ENCODE measurements at regions of chr2 and their contacts with region 1.

Region 1: DNA sequence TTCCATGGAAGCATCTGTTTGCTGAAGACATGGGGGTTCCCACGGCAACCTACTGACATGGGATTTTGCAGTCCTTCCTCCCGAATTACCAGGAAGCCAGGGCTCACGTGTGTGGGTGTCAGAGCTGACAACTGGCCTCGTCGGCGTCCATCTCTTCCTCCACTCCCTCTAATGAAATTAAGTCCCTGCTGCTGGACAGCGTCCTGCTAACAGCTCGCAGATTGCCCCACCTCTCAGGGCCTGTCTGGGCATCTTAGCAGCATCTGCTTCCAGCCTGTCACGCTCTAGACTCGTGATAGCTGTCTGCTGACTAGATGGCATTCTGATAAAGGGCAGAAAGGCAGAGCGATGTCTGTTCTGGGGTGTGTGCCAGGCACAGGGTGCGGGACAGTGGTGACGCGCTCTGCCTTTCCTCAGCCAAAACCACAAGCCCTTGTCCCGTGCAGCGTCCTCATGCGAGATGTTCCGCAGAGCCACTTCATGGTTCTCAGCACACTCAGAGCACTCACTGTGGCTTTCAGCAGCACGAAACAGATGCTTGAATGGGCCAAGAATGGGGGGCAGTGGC is 161.1 kb downstream of the ARL4C start:
- H3K4me3 Mint-ChIP-seq: peak overlapping the region; percentile 18
- H3K27ac Mint-ChIP-seq: peak overlapping the region; percentile 97
- H3K4me1 Mint-ChIP-seq: peaks cover 64% of the 10 kb centered on the region
- H3K27me3 Mint-ChIP-seq: peaks cover 12% of the 10 kb centered on the region

Region 2: DNA sequence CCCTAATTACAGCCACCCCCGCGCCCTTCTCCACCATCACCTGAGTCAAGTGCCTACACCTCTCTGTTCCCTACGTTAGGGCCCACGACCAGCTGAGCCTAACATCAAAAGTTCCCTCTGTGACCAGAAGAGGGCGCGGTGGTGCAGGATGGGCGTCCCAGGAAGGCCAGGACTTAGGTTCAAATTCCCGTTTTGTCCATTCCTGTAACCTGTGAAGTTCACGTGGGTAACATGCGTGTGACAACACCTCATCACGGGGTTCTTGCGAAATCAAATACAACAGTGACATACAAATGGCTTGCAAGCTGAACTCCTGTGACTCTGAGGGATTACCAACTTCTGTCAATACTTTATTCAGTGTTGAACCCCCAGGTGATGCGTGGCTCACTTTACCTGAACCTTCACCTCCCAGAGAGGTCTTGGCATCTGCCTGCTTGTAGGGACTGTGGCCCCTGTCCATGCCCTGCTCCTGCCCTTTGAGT is 46.7 kb before region 1 on chr2:
- intact Hi-C with region 1: loop called (anchors 1 kb)
- H3K4me3 Mint-ChIP-seq: no peak overlapping the region
- H3K27ac Mint-ChIP-seq: peak overlapping the region; percentile 93
- H3K4me1 Mint-ChIP-seq: peaks cover 45% of the 10 kb centered on the region
- H3K27me3 Mint-ChIP-seq: no peaks in the 10 kb centered on the region

Region 3: GRCh38 chr2:234308813-234309195 is 26.9 kb before region 1 on chr2:
- intact Hi-C with region 1: loop called (anchors 1 kb)
- H3K4me3 Mint-ChIP-seq: peak overlapping the region; percentile 45
- H3K27ac Mint-ChIP-seq: peak overlapping the region; percentile 98
- H3K4me1 Mint-ChIP-seq: peaks cover 60% of the 10 kb centered on the region
- H3K27me3 Mint-ChIP-seq: no peaks in the 10 kb centered on the region

Region 4: DNA sequence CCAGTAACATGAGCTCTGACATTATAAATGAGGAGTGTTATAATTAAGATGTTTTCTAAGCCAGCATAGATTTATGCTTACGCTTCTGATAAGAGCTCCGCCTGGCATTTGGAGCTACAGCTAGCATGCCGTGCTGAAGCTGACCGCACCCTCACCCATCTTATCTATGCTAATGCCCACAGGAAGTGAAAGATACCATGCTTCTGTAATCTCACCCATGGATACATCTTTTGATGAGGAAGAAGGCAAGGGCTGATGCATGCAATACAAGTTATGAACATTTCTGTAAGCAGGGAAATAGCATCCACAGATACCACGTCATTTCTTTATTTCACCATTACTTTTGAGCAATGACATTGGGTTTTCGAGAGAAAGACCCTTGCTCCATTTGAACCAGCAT is 78.9 kb after region 1 on chr2:
- intact Hi-C with region 1: loop called (anchors 1 kb)
- H3K4me3 Mint-ChIP-seq: no peak overlapping the region
- H3K27ac Mint-ChIP-seq: peak overlapping the region; percentile 91
- H3K4me1 Mint-ChIP-seq: peaks cover 27% of the 10 kb centered on the region
- H3K27me3 Mint-ChIP-seq: peaks cover 4% of the 10 kb centered on the region

Region 5: GRCh38 chr2:234425619-234426603 is 90.2 kb after region 1 on chr2:
- intact Hi-C with region 1: loop called (anchors 5 kb)
- H3K4me3 Mint-ChIP-seq: no peak overlapping the region
- H3K27ac Mint-ChIP-seq: peak overlapping the region; percentile 98
- H3K4me1 Mint-ChIP-seq: peaks cover 60% of the 10 kb centered on the region
- H3K27me3 Mint-ChIP-seq: no peaks in the 10 kb centered on the region

Region 6: GRCh38 chr2:234446404-234447076 is 110.8 kb after region 1 on chr2:
- intact Hi-C with region 1: loop called (anchors 1 kb)
- H3K4me3 Mint-ChIP-seq: peak overlapping the region; percentile 51
- H3K27ac Mint-ChIP-seq: peak overlapping the region; percentile 99
- H3K4me1 Mint-ChIP-seq: peaks cover 60% of the 10 kb centered on the region
- H3K27me3 Mint-ChIP-seq: no peaks in the 10 kb centered on the region

Region 7: DNA sequence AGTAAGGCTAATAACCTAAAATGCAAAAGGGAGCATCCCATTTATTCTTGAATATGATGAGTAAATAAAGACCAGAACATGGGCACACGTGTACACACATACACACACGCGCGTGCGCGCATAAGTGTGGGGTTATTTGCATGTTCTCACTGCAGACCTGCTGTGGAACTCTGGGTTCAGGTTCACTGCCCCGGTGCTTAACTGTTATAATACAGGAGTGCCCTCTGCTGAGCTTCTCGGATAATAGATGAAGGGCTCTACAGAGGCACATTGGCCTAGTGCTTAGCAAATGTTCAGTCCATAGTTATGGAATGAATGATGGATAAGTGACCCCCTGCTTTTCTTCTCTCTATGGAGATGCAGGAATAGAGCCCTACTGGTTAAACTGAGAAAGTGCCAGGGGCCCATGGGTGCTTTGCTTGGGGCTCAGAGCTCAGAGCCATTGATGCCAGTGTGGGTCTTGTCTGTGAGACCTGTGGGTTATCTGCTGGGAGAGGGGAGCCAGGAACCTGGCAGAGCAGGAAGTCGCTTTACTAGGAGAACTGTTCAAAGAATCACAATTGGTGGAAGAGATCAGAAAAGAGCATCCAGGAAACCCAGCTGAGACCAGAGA is 164.8 kb after region 1 on chr2:
- intact Hi-C with region 1: loop called (anchors 2 kb)
- H3K4me3 Mint-ChIP-seq: no peak overlapping the region
- H3K27ac Mint-ChIP-seq: no peak overlapping the region
- H3K4me1 Mint-ChIP-seq: peaks cover 12% of the 10 kb centered on the region
- H3K27me3 Mint-ChIP-seq: peaks cover 25% of the 10 kb centered on the region